Panc1 (cell line): ENCODE measurements at regions of chr7 and their contacts with region 1.

Region 1: DNA sequence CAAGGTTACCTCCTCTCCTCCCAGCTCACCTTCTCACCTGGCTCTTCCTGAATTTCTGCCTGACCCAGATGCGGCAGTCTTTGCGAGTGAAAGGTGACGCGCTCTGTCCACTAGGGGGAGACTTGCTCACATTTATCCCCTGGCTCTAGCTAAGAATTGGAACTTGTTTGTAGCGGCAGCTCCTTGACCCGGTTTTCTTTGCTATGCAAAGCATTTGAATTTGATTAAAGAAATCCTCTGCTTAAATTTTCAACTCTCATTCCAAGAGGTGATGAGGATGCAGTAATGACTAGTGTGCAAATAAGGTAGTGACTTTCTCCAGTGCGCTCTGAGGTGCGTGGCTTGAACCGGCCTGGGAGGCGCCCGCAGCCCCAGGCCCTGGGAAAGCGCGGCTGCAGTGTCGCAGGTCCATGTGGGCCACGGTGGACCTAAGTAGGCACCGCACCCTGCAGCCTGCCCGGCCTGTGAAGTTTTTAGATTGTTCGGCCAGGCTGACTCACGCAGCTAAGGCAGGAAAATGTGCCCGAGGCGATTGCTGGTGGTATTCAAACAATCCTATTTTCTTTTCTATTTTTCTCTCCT is 336.9 kb upstream of the NPSR1 start:
- DNase-seq: peak; percentile 58
- ATAC-seq: peak; percentile 96
- H3K4me3 ChIP-seq: peak overlapping the region; percentile 17 to 46
- H3K27ac ChIP-seq: no peak overlapping the region
- H3K4me1 ChIP-seq: peaks cover 6% of the 10 kb centered on the region; the same call in 1 of the 2 replicates
- H3K27me3 ChIP-seq: no peaks in the 10 kb centered on the region
- CTCF ChIP-seq: peak; percentile 96

Region 2: DNA sequence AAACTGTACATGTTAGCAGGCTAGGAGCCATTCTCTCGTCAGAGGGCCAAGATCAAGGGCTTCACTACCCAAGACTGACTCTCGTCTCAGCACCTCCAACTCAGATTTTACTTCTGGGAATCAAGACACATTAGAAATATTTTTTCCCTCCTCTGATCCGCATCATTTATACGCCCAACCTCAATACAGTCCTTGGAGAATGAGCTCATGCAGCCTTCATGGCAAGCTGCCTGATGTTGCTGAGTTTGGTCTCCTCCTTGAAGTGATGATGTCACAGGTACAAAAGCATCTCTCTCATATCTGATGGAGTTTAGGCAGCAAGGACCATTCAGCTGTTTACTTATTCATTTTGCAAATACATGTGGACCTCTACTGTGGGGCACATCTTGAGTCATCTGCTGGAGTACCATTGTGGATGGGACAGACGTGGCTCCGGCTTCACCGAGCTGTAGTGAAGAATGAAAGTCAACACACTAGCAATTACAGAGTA is 301.7 kb before region 1 on chr7:
- CTCF ChIA-PET with region 1: no interaction called
- POLR2A ChIA-PET with region 1: no interaction called
- in situ Hi-C with region 1: no loop called
- intact Hi-C with region 1: no loop called
- DNase-seq: no peak
- ATAC-seq: no peak
- H3K4me3 ChIP-seq: no peak overlapping the region
- H3K27ac ChIP-seq: no peak overlapping the region
- H3K4me1 ChIP-seq: no peaks in the 10 kb centered on the region
- H3K27me3 ChIP-seq: no peaks in the 10 kb centered on the region
- CTCF ChIP-seq: no peak

Region 3: GRCh38 chr7:34135924-34136323 is 185.2 kb before region 1 on chr7:
- CTCF ChIA-PET with region 1: interaction called, 3 read pairs
- POLR2A ChIA-PET with region 1: no interaction called
- in situ Hi-C with region 1: no loop called
- intact Hi-C with region 1: loop called (anchors 5 kb)
- DNase-seq: no peak
- ATAC-seq: no peak
- H3K4me3 ChIP-seq: no peak overlapping the region
- H3K27ac ChIP-seq: no peak overlapping the region
- H3K4me1 ChIP-seq: no peaks in the 10 kb centered on the region
- H3K27me3 ChIP-seq: peaks cover 5% of the 10 kb centered on the region; the same call in 1 of the 2 replicates
- CTCF ChIP-seq: no peak

Region 4: GRCh38 chr7:34260279-34260678 is 60.8 kb before region 1 on chr7:
- CTCF ChIA-PET with region 1: no interaction called
- POLR2A ChIA-PET with region 1: no interaction called
- in situ Hi-C with region 1: no loop called
- intact Hi-C with region 1: no loop called
- DNase-seq: no peak
- ATAC-seq: no peak
- H3K4me3 ChIP-seq: no peak overlapping the region
- H3K27ac ChIP-seq: no peak overlapping the region
- H3K4me1 ChIP-seq: no peaks in the 10 kb centered on the region
- H3K27me3 ChIP-seq: no peaks in the 10 kb centered on the region
- CTCF ChIP-seq: no peak

Region 5: GRCh38 chr7:34425187-34425586 is 104.1 kb after region 1 on chr7:
- CTCF ChIA-PET with region 1: no interaction called
- POLR2A ChIA-PET with region 1: no interaction called
- in situ Hi-C with region 1: no loop called
- intact Hi-C with region 1: loop called (anchors 10 kb)
- DNase-seq: no peak
- ATAC-seq: no peak
- H3K4me3 ChIP-seq: no peak overlapping the region
- H3K27ac ChIP-seq: no peak overlapping the region
- H3K4me1 ChIP-seq: no peaks in the 10 kb centered on the region
- H3K27me3 ChIP-seq: 0 out of 2 replicates have a peak, but pooled peaks cover 2% of the 10 kb centered on the region
- CTCF ChIP-seq: no peak

Region 6: DNA sequence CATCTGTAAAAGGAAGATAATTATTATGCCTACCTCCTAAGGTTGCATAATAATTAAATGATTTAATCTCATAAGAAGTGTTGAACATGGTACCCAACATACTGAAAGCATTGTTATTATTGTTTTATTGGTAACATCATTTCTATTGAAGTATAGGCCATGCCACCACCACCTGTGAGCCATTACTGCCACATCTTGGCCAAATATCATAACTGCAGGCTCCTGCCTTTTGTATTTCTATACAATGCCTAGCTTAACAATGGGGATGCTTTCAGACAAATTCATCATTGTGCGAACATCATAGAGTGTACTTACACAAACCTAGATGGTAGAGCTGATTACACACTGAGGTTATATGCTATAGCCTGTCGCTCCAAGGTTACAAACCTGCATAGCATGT is 275.8 kb after region 1 on chr7:
- CTCF ChIA-PET with region 1: interaction called, 11 read pairs
- POLR2A ChIA-PET with region 1: no interaction called
- in situ Hi-C with region 1: no loop called
- intact Hi-C with region 1: loop called (anchors 2 kb)
- DNase-seq: no peak
- ATAC-seq: peak; percentile 75
- H3K4me3 ChIP-seq: no peak overlapping the region
- H3K27ac ChIP-seq: no peak overlapping the region
- H3K4me1 ChIP-seq: no peaks in the 10 kb centered on the region
- H3K27me3 ChIP-seq: peaks cover 8% of the 10 kb centered on the region
- CTCF ChIP-seq: peak; percentile 48; the same call in 1 of the 2 replicates